A549 (cell line): ENCODE measurements at regions of chr10 and their contacts with region 1.

Region 1: DNA sequence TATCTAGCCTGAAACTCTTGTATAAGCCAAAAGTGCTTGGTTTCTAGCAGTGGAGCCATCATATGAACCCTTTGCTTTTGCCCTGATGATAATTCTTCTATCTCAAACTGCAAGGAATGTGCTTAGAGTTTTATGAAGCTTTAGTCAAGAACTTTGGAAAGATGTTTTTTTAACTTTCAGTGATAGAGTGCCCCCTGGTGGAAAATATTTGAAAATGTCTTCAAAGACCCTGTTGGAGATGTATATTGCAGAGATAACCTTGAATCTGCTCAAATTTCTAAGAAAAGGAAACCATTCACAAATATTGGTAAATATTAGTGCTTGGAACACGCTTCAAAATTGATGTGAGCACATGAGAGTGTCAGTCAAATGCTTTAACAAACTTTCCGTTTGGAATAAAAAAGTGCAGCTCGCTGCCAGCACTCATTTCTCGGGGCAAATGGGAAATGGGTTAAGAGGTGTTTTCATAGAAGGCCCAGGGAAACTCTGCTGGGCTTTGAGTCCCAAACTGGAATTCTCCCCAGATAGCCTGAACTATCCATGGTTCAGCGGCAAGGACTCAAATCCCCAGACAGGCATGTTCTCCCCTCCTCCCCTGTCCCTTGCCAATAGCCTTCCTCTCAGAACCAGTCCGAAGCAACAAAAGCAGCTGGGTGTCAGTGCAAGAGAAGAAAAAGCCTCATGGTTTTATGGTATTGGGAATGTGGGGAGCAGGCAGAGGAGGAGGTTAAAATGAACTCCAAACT is 129.3 kb downstream of the MYOF start:
- DNase-seq: peak; percentile 38 to 44
- ATAC-seq: peak in 1 of 2 experiments; percentile 58; a peak in 3 of 6 replicates
- H3K4me3 ChIP-seq: no peak overlapping the region
- H3K27ac ChIP-seq: no peak overlapping the region
- H3K4me1 ChIP-seq: no peaks in the 10 kb centered on the region
- CTCF ChIP-seq: peak; percentile 86
- EP300 ChIP-seq: no peak
- POLR2A ChIP-seq: no peak
- RAD21 ChIP-seq: peak; percentile 49 to 58

Region 2: DNA sequence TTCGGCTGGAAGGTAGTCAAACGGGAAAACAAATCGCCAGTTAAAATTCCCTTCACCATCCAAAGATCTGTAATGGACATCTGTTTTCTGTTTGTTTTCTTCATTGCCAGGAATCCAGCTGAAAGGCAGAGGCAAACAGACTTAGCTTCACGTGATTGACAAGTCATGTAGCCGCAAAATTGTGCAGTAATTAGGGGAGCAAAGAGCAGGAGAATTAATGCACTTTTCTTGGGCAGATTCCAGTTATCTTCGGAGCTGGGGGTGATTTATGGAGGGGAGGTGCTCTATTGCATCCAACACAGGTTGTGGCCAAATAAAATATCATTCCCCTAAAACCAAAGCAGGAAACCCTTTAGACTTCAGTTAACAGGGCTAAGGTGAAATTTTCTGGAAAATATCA is 32.9 kb before region 1 on chr10:
- CTCF ChIA-PET with region 1: interaction called, 18 read pairs
- POLR2A ChIA-PET with region 1: no interaction called
- DNase-seq: no peak
- ATAC-seq: no peak
- H3K4me3 ChIP-seq: no peak overlapping the region
- H3K27ac ChIP-seq: no peak overlapping the region
- H3K4me1 ChIP-seq: no peaks in the 10 kb centered on the region
- CTCF ChIP-seq: no peak
- EP300 ChIP-seq: no peak
- POLR2A ChIP-seq: no peak
- RAD21 ChIP-seq: no peak

Region 3: GRCh38 chr10:93334901-93335327 is 17.9 kb before region 1 on chr10:
- CTCF ChIA-PET with region 1: interaction called, 10 read pairs
- POLR2A ChIA-PET with region 1: no interaction called
- DNase-seq: no peak
- ATAC-seq: peak in 1 of 2 experiments; percentile 13; a peak in 3 of 6 replicates
- H3K4me3 ChIP-seq: no peak overlapping the region
- H3K27ac ChIP-seq: no peak overlapping the region
- H3K4me1 ChIP-seq: no peaks in the 10 kb centered on the region
- CTCF ChIP-seq: no peak
- EP300 ChIP-seq: no peak
- POLR2A ChIP-seq: no peak
- RAD21 ChIP-seq: no peak

Region 4: GRCh38 chr10:93363891-93364648 is 11.3 kb after region 1 on chr10:
- CTCF ChIA-PET with region 1: interaction called, 37 read pairs
- POLR2A ChIA-PET with region 1: no interaction called
- DNase-seq: no peak
- ATAC-seq: no peak
- H3K4me3 ChIP-seq: no peak overlapping the region
- H3K27ac ChIP-seq: no peak overlapping the region
- H3K4me1 ChIP-seq: no peaks in the 10 kb centered on the region
- CTCF ChIP-seq: no peak
- EP300 ChIP-seq: no peak
- POLR2A ChIP-seq: no peak
- RAD21 ChIP-seq: no peak

Region 5: GRCh38 chr10:93515071-93516005 is 162.5 kb after region 1 on chr10:
- CTCF ChIA-PET with region 1: interaction called, 17 read pairs
- POLR2A ChIA-PET with region 1: no interaction called
- DNase-seq: no peak
- ATAC-seq: no peak
- H3K4me3 ChIP-seq: no peak overlapping the region
- H3K27ac ChIP-seq: no peak overlapping the region
- H3K4me1 ChIP-seq: no peaks in the 10 kb centered on the region
- CTCF ChIP-seq: no peak
- EP300 ChIP-seq: no peak
- POLR2A ChIP-seq: no peak
- RAD21 ChIP-seq: no peak